Breast epithelium (tissue), 4 donors: ENCODE measurements at regions of chr20 and their contacts with region 1.

Region 1: GRCh38 chr20:444862-445426 is 17.4 kb downstream of the TBC1D20 start:
- DNase-seq: no peak
- H3K4me3 ChIP-seq: no peak overlapping the region
- H3K27ac ChIP-seq: peak overlapping the region in 1 of 2 donors; percentile 20
- H3K4me1 ChIP-seq: no peaks in the 10 kb centered on the region
- H3K27me3 ChIP-seq: no peaks in the 10 kb centered on the region
- CTCF ChIP-seq: no peak
- POLR2A ChIP-seq: no peak

Region 2: GRCh38 chr20:381581-382290 is 63.2 kb before region 1 on chr20:
- intact Hi-C with region 1: no loop called
- DNase-seq: peak; percentile 66 to 83
- H3K4me3 ChIP-seq: peak overlapping the region; percentile 66 to 92 (median 82)
- H3K27ac ChIP-seq: peak overlapping the region; percentile 74 to 91
- H3K4me1 ChIP-seq: no peaks in the 10 kb centered on the region
- H3K27me3 ChIP-seq: no peaks in the 10 kb centered on the region
- CTCF ChIP-seq: no peak
- POLR2A ChIP-seq: no peak

Region 3: GRCh38 chr20:1671891-1672669 is 1227.1 kb after region 1 on chr20:
- intact Hi-C with region 1: loop called (anchors 10 kb)
- DNase-seq: no peak
- H3K4me3 ChIP-seq: no peak overlapping the region
- H3K27ac ChIP-seq: no peak overlapping the region
- H3K4me1 ChIP-seq: no peaks in the 10 kb centered on the region
- H3K27me3 ChIP-seq: no peaks in the 10 kb centered on the region
- CTCF ChIP-seq: no peak
- POLR2A ChIP-seq: no peak